Activated CD4-positive, alpha-beta T cell treated with anti-CD3 and anti-CD28 coated beads, Interleukin-2, amount 10 ng/mL, durations not matched to agents 7 days and 5 days (primary cell): ENCODE measurements at regions of chr2 and their contacts with region 1.

Region 1: DNA sequence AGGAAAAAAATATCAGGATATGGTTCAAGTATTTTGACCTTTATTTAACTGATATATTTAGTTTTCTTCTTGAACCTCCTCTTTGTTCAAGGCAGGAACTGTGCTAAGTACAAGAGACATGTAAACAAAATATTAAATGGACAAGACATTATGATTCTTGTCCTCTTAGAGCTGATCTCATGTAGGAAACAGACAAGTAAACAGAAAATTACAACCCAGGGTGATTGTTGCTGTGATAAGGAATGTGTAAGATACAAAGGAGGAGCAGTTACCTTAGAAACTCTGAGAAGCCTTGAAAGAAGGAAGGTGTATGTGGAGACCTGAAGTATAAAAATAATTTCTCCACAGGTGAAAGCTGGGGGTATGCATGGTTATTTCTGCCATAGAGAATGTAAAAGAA is 12.9 kb downstream of the RBM45 start:
- DNase-seq: no peak
- H3K4me3 Mint-ChIP-seq: no peak overlapping the region
- H3K27ac Mint-ChIP-seq: no peak overlapping the region
- H3K4me1 Mint-ChIP-seq: no peaks in the 10 kb centered on the region
- H3K27me3 Mint-ChIP-seq: no peaks in the 10 kb centered on the region

Region 2: GRCh38 chr2:178084273-178084672 is 40.9 kb before region 1 on chr2:
- CTCF ChIA-PET with region 1: no interaction called
- POLR2A ChIA-PET with region 1: no interaction called
- DNase-seq: no peak
- H3K4me3 Mint-ChIP-seq: no peak overlapping the region
- H3K27ac Mint-ChIP-seq: no peak overlapping the region
- H3K4me1 Mint-ChIP-seq: no peaks in the 10 kb centered on the region
- H3K27me3 Mint-ChIP-seq: peaks cover 10% of the 10 kb centered on the region

Region 3: DNA sequence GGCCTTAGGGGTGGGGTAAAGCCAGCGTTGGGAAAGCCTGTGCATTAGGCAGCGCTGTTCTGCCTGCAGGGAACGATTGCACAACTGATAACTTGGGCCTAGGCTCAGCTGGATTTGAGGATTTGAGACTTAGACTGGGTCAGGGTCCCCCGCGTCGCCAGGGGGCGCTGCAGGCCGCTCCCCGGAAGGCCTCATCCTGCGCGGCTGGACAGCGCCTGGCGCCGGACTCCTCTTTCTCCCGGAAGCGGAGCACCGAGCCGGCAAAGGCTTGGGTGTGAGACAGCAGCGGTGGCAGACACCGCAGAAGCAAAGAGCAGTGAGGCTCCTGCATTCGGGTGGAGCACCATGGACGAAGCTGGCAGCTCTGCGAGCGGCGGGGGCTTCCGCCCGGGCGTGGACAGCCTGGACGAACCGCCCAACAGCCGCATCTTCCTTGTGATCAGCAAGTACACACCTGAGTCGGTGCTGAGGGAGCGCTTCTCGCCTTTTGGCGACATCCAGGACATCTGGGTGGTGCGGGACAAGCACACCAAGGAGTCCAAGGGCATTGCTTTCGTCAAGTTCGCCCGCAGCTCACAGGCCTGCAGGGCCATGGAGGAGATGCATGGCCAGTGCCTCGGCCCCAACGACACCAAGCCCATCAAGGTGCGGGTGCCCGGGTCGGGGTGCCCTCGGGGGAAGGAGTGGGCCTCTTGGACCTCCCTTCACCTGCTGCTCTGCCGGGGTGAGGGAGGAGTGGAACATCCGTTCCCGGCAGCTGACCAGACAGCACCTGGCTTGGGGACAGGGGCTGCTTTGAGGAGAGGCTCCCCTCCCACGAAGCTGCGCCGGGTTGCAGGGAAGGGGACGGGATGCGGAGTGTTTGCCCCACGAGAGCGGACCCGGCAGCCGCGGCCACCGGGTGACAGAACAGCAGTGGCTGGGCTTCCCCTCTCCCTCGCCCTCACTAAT is 12.6 kb before region 1 on chr2 and contains the start of gene RBM45:
- CTCF ChIA-PET with region 1: interaction called, 13 read pairs
- POLR2A ChIA-PET with region 1: no interaction called
- DNase-seq: peak; percentile 85
- H3K4me3 Mint-ChIP-seq: peak within 1 kb of the TSS; percentile 90
- H3K27ac Mint-ChIP-seq: peak within 1 kb of the TSS; percentile 90
- H3K4me1 Mint-ChIP-seq: peaks cover 38% of the 10 kb centered on the region
- H3K27me3 Mint-ChIP-seq: no peaks in the 10 kb centered on the region
- total RNA-seq, gene RBM45: 19.0 to 22.0 TPM

Region 4: GRCh38 chr2:178219247-178219646 is 94.1 kb after region 1 on chr2:
- CTCF ChIA-PET with region 1: no interaction called
- POLR2A ChIA-PET with region 1: no interaction called
- DNase-seq: no peak
- H3K4me3 Mint-ChIP-seq: no peak overlapping the region
- H3K27ac Mint-ChIP-seq: no peak overlapping the region
- H3K4me1 Mint-ChIP-seq: no peaks in the 10 kb centered on the region
- H3K27me3 Mint-ChIP-seq: peaks cover 30% of the 10 kb centered on the region